ENCODE measurements at regions of chr15 and their contacts with region 1.

Region 1: DNA sequence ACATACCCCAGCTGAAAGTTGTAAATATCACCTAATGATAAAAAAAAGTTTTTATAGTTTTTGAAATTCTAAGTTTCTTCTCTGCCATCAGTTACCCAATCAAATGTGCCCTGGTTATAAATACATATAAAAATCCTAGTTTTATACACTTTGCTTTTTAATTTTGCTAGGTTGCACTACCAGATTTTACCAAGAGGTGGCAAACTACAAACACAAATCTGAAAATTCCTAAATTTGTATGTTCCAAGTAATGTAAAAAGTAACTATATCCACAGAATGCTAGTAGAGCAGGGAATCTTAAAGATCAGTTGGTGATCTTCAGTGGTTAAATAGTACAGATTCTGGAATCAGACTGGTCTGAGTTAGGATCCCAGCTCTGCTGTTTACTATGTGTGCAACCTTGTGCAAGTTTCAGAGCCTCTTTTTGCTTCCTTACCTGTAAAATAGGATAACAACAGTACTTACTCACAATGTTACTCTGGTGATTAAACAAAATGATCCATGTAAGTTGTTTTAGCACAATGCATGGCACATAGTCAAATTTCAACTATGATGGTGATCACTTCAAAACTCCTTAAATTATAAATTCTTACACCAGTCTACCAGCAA is 11.0 kb downstream of the TRPM7 start:
- DNase-seq: no peak
- H3K4me3 ChIP-seq: no peak overlapping the region
- H3K27ac ChIP-seq: no peak overlapping the region; the same call in 1 of the 2 replicates
- H3K4me1 ChIP-seq: no peaks in the 10 kb centered on the region
- H3K27me3 ChIP-seq: no peaks in the 10 kb centered on the region
- CTCF ChIP-seq: peak; percentile 84

Region 2: DNA sequence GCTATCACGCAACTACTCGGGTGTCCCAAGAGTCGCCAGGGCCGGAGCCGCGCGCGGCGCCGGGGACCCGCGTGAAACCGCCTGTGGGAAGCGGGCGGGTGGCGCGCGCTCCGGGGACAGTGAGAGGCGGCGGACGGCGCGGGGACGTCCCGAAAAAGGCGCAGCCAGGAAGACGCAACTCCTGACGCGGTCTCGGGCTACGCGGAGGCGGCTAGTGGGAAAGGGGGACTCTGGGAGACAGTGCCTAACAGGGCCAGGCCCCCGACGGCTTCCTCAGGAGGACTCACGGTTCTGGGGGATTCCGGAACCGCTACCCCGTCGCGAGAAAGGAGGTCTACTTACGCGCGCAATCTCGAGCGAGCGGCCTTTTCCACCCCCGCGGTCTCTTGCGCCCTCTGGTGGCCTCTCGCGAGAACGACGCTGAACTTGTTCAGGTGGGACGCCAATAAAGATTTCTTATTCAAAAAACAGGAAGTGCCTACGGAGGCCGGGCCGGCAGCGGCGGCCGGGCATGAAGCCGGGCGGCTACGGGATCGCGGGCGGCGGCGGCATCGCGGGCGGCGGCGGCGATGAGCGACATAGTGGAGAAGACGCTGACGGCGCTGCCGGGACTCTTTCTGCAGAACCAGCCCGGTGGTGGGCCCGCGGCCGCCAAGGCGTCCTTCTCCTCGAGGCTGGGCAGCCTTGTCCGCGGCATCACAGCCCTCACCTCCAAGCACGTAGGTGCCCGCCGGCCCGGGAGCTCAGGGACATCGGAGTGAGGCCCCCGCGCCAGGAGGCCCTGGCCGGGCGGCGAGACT is 232.8 kb after region 1 on chr15 and contains the start of gene AP4E1:
- CTCF ChIA-PET with region 1: no interaction called
- POLR2A ChIA-PET with region 1: no interaction called
- intact Hi-C with region 1: loop called (anchors 1 kb)
- DNase-seq: peak; percentile 76 to 88
- H3K4me3 ChIP-seq: peak within 1 kb of the TSS; percentile 74
- H3K27ac ChIP-seq: peak within 1 kb of the TSS; percentile 46; the same call in 1 of the 2 replicates
- H3K4me1 ChIP-seq: peaks cover 7% of the 10 kb centered on the region; the same call in 1 of the 2 replicates
- H3K27me3 ChIP-seq: no peaks in the 10 kb centered on the region
- CTCF ChIP-seq: peak; percentile 86
- total RNA-seq, gene AP4E1: 5.7 and 10.0 TPM in 2 replicates